AG04450 (cell line): ENCODE measurements at regions of chr1 and their contacts with region 1.

Region 1: GRCh38 chr1:154272217-154272998 is at the start of gene HAX1:
- DNase-seq: peak; percentile 89
- H3K4me3 ChIP-seq: peak within 1 kb of the TSS; percentile 94
- H3K27ac ChIP-seq: peak within 1 kb of the TSS; percentile 91
- H3K27me3 ChIP-seq: no peaks in the 10 kb centered on the region
- CTCF ChIP-seq: peak; percentile 82
- polyA plus RNA-seq, gene HAX1: 131 and 148 TPM in 2 replicates

Region 2: GRCh38 chr1:154198756-154199562 is 73.4 kb before region 1 on chr1:
- CTCF ChIA-PET with region 1: interaction called, 25 read pairs
- POLR2A ChIA-PET with region 1: no interaction called
- DNase-seq: no peak
- H3K4me3 ChIP-seq: no peak overlapping the region; the same call in 1 of the 2 replicates
- H3K27ac ChIP-seq: no peak overlapping the region
- H3K27me3 ChIP-seq: peaks cover 5% of the 10 kb centered on the region
- CTCF ChIP-seq: peak; percentile 65

Region 3: DNA sequence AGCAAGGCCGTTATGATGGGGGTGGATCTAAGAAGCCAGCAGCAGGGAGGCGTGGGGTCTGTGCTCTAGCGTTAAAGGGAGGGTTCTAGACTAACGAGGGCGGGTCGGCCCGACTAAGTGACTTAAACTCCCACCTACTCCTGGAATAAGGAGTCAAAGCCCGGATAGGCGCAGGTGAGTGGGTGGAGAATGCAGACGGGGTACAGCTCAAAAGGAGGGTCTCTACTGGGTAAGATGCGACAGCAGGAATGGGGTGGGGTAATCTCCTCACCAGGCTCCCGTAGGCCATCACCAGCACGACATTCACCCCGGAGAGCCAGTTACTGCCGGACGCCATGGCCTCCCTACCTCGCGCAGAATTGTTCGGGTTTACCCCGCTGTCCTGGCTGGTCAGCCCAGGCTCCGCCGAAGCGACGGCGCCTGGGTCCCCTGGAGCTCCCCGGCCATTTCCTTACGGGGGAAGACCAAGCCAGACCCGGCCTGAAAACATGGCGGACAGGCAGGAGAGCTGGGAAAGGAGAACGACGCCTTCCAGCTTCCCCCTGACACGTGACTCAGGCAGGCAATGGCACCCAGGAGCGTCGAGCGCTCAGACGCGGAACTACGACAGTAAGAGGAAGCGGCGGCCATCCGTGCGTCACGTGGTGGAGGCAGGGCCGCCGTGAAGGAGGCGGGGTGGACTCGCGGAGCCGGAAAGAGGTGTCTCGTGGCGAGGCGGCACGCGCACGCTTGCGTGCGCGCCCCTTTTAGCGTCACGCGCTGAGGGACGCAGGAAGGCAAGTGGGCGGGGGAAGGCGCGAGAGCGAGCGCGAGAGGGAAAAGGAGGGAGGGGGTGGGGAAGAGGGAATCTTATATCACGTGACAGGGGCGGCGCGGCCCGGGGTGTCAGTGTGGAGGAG is 52.1 kb before region 1 on chr1 and contains the start of gene UBAP2L:
- CTCF ChIA-PET with region 1: interaction called, 3 read pairs
- POLR2A ChIA-PET with region 1: interaction called, 15 read pairs
- DNase-seq: peak; percentile 98
- H3K4me3 ChIP-seq: peak within 1 kb of the TSS; percentile 95
- H3K27ac ChIP-seq: peak within 1 kb of the TSS; percentile 99
- H3K27me3 ChIP-seq: no peaks in the 10 kb centered on the region
- CTCF ChIP-seq: no peak
- polyA plus RNA-seq, gene UBAP2L: 173 and 177 TPM in 2 replicates

Region 4: GRCh38 chr1:154318386-154318785 is 46.0 kb after region 1 on chr1:
- CTCF ChIA-PET with region 1: no interaction called
- POLR2A ChIA-PET with region 1: interaction called, 10 read pairs
- DNase-seq: no peak
- H3K4me3 ChIP-seq: no peak overlapping the region
- H3K27ac ChIP-seq: no peak overlapping the region
- H3K27me3 ChIP-seq: peaks cover 19% of the 10 kb centered on the region
- CTCF ChIP-seq: no peak

Region 5: DNA sequence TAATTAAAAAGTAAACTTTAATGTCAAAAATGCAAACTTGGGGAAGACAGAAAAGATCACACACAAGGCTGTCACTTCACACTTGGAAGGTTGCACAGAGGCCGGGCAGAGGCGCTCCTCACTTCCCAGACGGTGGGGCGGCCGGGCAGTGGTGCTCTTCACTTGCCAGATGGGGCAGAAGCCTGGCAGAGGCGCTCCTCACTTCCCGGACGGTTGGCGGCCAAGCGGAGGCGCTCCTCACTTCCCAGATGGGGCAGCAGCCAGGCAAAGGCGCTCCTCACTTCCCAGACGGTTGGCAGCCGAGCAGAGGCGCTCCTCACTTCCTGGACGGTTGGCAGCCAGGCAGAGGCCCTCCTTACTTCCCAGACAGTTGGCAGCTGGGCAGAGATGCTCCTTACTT is 106.9 kb after region 1 on chr1:
- CTCF ChIA-PET with region 1: no interaction called
- POLR2A ChIA-PET with region 1: no interaction called
- DNase-seq: no peak
- H3K4me3 ChIP-seq: no peak overlapping the region
- H3K27ac ChIP-seq: no peak overlapping the region
- H3K27me3 ChIP-seq: peaks cover 9% of the 10 kb centered on the region
- CTCF ChIP-seq: no peak